Psoas muscle (tissue), 8 donors: ENCODE measurements at regions of chr12 and their contacts with region 1.

Region 1: GRCh38 chr12:29782285-29782870 is 1.4 kb downstream of the TMTC1 start:
- DNase-seq: no peak
- ATAC-seq: peak; percentile 60 to 74 (median 70)
- H3K4me3 ChIP-seq: peak overlapping the region; percentile 75
- H3K27ac ChIP-seq: peak overlapping the region; percentile 93
- H3K4me1 ChIP-seq: peaks cover 44% of the 10 kb centered on the region
- H3K27me3 ChIP-seq: no peaks in the 10 kb centered on the region
- CTCF ChIP-seq: no peak

Region 2: DNA sequence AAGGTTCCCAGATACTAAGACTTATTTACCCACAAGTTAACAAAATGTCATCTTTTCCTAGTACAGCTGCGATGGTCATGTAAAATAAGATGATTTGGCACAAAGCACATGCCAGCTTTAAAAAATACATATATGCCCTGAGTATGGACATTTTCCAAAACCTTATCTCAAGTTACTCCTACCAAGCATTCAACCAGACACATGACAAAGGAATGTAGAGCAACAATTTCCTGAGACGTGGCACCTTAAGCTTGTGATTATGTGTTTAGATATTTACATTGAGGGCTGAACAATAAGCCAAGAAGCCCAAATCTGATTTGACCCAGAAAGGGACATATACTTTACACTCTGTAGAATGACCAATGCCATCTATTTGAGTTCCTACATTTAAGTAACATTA is 260.4 kb before region 1 on chr12:
- intact Hi-C with region 1: no loop called
- DNase-seq: no peak
- ATAC-seq: no peak
- H3K4me3 ChIP-seq: no peak overlapping the region
- H3K27ac ChIP-seq: peak overlapping the region; percentile 14
- H3K4me1 ChIP-seq: peaks cover 13% of the 10 kb centered on the region
- H3K27me3 ChIP-seq: no peaks in the 10 kb centered on the region
- CTCF ChIP-seq: no peak

Region 3: GRCh38 chr12:29545102-29545467 is 237.3 kb before region 1 on chr12:
- intact Hi-C with region 1: loop called (anchors 1 to 10 kb)
- DNase-seq: no peak
- ATAC-seq: no peak
- H3K4me3 ChIP-seq: no peak overlapping the region
- H3K27ac ChIP-seq: peak overlapping the region; percentile 51
- H3K4me1 ChIP-seq: peaks cover 31% of the 10 kb centered on the region
- H3K27me3 ChIP-seq: no peaks in the 10 kb centered on the region
- CTCF ChIP-seq: no peak

Region 4: DNA sequence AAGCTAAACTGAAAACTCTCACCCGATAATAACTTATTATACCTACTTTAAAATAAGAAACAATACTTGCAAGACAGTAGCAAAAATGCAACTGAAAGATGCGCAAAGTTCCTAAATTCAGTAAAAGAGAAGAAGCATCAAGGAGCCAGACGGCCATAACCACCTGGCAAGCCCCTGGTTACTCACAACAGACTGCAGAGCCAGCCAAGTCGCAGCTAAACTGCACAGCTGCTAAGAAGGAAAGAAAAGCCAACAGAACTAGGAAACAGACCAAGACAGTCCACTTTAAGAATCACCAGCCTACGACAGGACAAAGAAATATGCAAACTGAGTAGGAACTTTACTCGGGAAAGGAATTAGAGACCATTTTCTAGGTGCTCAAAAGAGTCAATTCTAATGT is 126.5 kb before region 1 on chr12:
- intact Hi-C with region 1: loop called (anchors 5 to 10 kb)
- DNase-seq: peak; percentile 25 to 65
- ATAC-seq: peak; percentile 50 to 67 (median 66)
- H3K4me3 ChIP-seq: peak overlapping the region; percentile 14
- H3K27ac ChIP-seq: peak overlapping the region; percentile 75
- H3K4me1 ChIP-seq: peaks cover 32% of the 10 kb centered on the region
- H3K27me3 ChIP-seq: no peaks in the 10 kb centered on the region
- CTCF ChIP-seq: no peak

Region 5: GRCh38 chr12:29743801-29744200 is 38.6 kb before region 1 on chr12:
- intact Hi-C with region 1: loop called in 1 of 2 experiments (anchors 5 kb)
- DNase-seq: no peak
- ATAC-seq: peak; percentile 81 to 93 (median 90)
- H3K4me3 ChIP-seq: no peak overlapping the region
- H3K27ac ChIP-seq: peak overlapping the region; percentile 74
- H3K4me1 ChIP-seq: peaks cover 52% of the 10 kb centered on the region
- H3K27me3 ChIP-seq: no peaks in the 10 kb centered on the region
- CTCF ChIP-seq: no peak

Region 6: GRCh38 chr12:30795410-30796312 is 1013.3 kb after region 1 on chr12:
- intact Hi-C with region 1: loop called in 1 of 2 experiments (anchors 5 kb)
- DNase-seq: peak; percentile 72 to 73
- ATAC-seq: peak; percentile 69 to 82 (median 76)
- H3K4me3 ChIP-seq: peak overlapping the region; percentile 88
- H3K27ac ChIP-seq: peak overlapping the region; percentile 80
- H3K4me1 ChIP-seq: peaks cover 10% of the 10 kb centered on the region
- H3K27me3 ChIP-seq: no peaks in the 10 kb centered on the region
- CTCF ChIP-seq: peak; percentile 24